ENCODE measurements at regions of chr16 and their contacts with region 1.

Region 1: DNA sequence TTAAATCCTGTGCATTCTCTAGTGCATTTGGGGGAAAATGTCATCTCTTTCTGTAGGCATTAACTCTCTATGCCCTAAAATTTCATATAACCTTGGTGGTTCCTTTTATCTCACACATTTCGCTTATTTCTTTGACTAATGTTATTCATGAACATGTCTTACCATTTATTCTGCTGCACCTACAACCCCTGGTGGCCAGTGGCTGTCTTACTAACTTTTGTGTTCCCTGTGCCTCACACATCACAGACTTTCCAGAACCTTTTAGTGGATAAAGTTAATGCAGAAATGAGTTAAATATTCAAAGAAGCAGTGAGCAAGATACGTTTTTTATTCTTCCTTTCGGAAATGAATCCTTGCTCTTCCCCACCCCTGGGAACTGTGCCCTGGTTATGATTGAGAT is 111.9 kb downstream of the CDH13 start:
- DNase-seq: no peak
- H3K4me3 ChIP-seq: no peak overlapping the region
- H3K27ac ChIP-seq: no peak overlapping the region
- H3K4me1 ChIP-seq: no peaks in the 10 kb centered on the region
- H3K27me3 ChIP-seq: peaks cover 0 to 15% (median 0%) of the 10 kb centered on the region in 7 donors
- CTCF ChIP-seq: no peak
- POLR2A ChIP-seq: no peak

Region 2: GRCh38 chr16:82598771-82599170 is 139.9 kb before region 1 on chr16:
- intact Hi-C with region 1: no loop called
- DNase-seq: no peak
- H3K4me3 ChIP-seq: no peak overlapping the region
- H3K27ac ChIP-seq: no peak overlapping the region
- H3K4me1 ChIP-seq: no peaks in the 10 kb centered on the region
- H3K27me3 ChIP-seq: peaks cover 0 to 24% (median 0%) of the 10 kb centered on the region in 7 donors
- CTCF ChIP-seq: no peak
- POLR2A ChIP-seq: no peak

Region 3: GRCh38 chr16:82639666-82640336 is 98.9 kb before region 1 on chr16:
- intact Hi-C with region 1: loop called (anchors 10 kb)
- DNase-seq: no peak
- H3K4me3 ChIP-seq: no peak overlapping the region
- H3K27ac ChIP-seq: no peak overlapping the region
- H3K4me1 ChIP-seq: no peaks in the 10 kb centered on the region
- H3K27me3 ChIP-seq: peaks cover 0 to 18% (median 0%) of the 10 kb centered on the region in 7 donors
- CTCF ChIP-seq: peak; percentile 29 to 73 (median 56)
- POLR2A ChIP-seq: no peak

Region 4: DNA sequence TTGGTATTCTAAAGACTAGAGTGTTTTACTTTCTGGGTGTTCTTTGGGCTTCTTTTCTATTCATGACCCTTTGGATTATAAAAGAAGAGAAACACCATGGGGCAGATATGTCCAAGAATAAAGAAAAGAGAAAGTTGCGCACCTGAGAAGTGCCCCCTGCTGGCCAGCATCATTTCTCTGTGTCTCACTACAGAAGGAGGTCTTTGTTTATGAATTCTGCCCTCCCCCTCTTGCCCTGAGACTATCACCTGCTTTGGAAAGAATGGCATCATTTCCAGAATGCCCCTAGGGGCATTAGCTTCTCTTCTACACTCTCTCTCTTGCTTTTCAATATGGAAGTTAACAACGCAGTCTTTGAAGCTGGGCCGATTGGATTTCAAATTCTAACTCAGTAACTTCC is 67.0 kb before region 1 on chr16:
- intact Hi-C with region 1: no loop called
- DNase-seq: no peak
- H3K4me3 ChIP-seq: no peak overlapping the region
- H3K27ac ChIP-seq: no peak overlapping the region
- H3K4me1 ChIP-seq: no peaks in the 10 kb centered on the region
- H3K27me3 ChIP-seq: peaks cover 0 to 6% (median 0%) of the 10 kb centered on the region in 7 donors
- CTCF ChIP-seq: peak in 4 of 11 experiments; percentile 9 to 22 (median 20)
- POLR2A ChIP-seq: no peak

Measured in spleen (tissue), 13 donors.